GM12878 (cell line): ENCODE measurements at regions of chr20 and their contacts with region 1.

Region 1: GRCh38 chr20:18718129-18718528 is 95.5 kb upstream of the SCP2D1 start:
- DNase-seq: no peak
- ATAC-seq: peak; percentile 66
- H3K4me3 ChIP-seq: no peak overlapping the region
- H3K27ac ChIP-seq: no peak overlapping the region
- H3K4me1 ChIP-seq: no peaks in the 10 kb centered on the region
- H3K27me3 ChIP-seq: no peaks in the 10 kb centered on the region
- CTCF ChIP-seq: peak in 2 of 3 experiments; percentile 36; a peak in 4 of 6 replicates
- EP300 ChIP-seq: no peak
- POLR2A ChIP-seq: no peak
- RAD21 ChIP-seq: peak; percentile 32; the same call in 1 of the 2 replicates

Region 2: GRCh38 chr20:18728165-18728869 is 10.2 kb after region 1 on chr20:
- CTCF ChIA-PET with region 1: interaction called, 11 read pairs
- POLR2A ChIA-PET with region 1: no interaction called
- RAD21 ChIA-PET with region 1: no interaction called
- SMC1A ChIA-PET with region 1: interaction called, 7 read pairs
- in situ Hi-C with region 1: no loop called
- intact Hi-C with region 1: no loop called
- DNase-seq: peak; percentile 70
- ATAC-seq: peak; percentile 94
- H3K4me3 ChIP-seq: peak overlapping the region; percentile 35; the same call in 1 of the 2 replicates
- H3K27ac ChIP-seq: peak overlapping the region; percentile 47
- H3K4me1 ChIP-seq: peaks cover 22% of the 10 kb centered on the region
- H3K27me3 ChIP-seq: no peaks in the 10 kb centered on the region
- CTCF ChIP-seq: no peak
- EP300 ChIP-seq: peak in 1 of 2 experiments; percentile 69; a peak in 2 of 4 replicates
- POLR2A ChIP-seq: no peak
- RAD21 ChIP-seq: no peak